ENCODE measurements at regions of chr20 and their contacts with region 1.

Region 1: DNA sequence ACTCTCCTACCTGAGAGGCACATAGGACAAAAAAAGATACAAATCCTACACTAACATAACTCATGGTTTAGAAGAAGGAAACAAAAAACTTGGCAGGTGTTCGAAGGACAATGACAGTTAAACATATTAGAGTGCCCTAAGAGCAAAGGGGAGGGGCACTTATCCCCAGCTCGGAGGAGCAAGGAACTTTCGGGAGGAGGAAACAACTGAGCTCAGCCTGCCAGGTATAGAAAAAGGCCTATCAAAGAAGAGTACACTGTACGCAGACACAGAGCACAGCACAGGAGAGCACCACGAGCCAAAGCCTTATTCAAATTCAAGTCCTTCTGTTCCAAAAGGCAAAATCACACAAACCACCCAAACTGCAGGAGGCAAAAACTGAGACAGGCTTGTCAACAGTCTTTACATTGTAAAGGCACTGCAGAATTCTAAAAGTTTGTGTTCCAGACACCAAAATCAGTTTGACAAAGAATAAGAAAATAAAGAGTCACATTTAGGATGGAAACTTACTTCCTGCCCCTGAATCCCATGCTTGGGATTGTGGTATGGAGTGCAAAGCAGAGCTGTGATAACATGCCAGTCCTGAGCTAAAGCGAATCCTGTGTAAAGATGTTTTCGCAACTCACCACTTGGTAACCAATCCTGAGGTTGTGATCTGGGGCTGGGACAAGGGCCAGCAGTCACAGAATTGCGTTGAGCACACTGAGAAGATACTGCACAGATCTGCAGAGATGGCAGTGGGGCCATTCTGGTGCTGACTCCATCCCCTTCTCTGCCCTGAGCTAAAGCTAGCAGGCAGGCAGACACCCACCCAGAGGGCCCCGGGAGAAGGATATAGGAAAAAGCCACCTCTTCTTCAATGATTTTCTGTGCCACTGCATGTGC is 108.6 kb downstream of the CHD6 start:
- DNase-seq: peak; percentile 49 to 68
- H3K4me3 ChIP-seq: no peak overlapping the region
- H3K27ac ChIP-seq: peak overlapping the region; percentile 39 to 54
- H3K4me1 ChIP-seq: peaks cover 0 to 36% (median 23%) of the 10 kb centered on the region in 4 donors
- H3K27me3 ChIP-seq: no peaks in the 10 kb centered on the region
- CTCF ChIP-seq: no peak

Region 2: GRCh38 chr20:41462372-41463161 is 47.0 kb before region 1 on chr20:
- intact Hi-C with region 1: no loop called
- DNase-seq: no peak
- H3K4me3 ChIP-seq: no peak overlapping the region
- H3K27ac ChIP-seq: no peak overlapping the region
- H3K4me1 ChIP-seq: no peaks in the 10 kb centered on the region
- H3K27me3 ChIP-seq: no peaks in the 10 kb centered on the region
- CTCF ChIP-seq: no peak

Region 3: DNA sequence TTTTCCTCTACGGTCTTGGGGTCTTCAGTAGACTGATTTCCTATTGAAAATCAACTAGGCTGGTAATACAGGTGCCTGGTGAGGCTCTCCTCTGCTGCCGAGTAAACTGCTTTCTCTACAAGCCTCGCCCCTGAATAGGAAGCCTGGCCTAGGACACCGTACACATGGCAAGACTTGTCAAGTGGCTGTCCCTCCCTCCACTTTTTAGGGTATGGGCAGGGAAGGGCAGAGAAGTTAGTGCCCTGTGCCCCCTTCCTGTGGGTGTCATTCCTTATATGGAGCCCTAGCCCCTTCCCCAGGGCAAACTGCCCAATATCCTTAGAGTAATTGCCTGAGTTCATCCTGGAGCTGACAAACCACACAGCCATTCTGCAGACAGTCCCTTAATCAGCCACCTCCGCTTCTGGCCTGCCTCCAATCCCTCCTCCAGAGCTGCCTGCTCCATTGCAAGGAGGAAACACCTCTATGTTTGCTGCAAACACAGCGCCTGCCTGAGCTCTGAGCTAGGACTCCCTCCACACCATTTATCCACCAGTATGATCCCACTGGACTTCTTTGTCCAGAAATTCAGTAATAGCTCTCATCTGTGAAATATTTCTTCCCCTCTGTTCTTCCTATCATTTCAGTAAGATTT is 15.5 kb after region 1 on chr20:
- intact Hi-C with region 1: no loop called
- DNase-seq: peak; percentile 31 to 70
- H3K4me3 ChIP-seq: no peak overlapping the region
- H3K27ac ChIP-seq: no peak overlapping the region
- H3K4me1 ChIP-seq: peaks cover 0 to 22% (median 11%) of the 10 kb centered on the region in 4 donors
- H3K27me3 ChIP-seq: no peaks in the 10 kb centered on the region
- CTCF ChIP-seq: no peak

Region 4: DNA sequence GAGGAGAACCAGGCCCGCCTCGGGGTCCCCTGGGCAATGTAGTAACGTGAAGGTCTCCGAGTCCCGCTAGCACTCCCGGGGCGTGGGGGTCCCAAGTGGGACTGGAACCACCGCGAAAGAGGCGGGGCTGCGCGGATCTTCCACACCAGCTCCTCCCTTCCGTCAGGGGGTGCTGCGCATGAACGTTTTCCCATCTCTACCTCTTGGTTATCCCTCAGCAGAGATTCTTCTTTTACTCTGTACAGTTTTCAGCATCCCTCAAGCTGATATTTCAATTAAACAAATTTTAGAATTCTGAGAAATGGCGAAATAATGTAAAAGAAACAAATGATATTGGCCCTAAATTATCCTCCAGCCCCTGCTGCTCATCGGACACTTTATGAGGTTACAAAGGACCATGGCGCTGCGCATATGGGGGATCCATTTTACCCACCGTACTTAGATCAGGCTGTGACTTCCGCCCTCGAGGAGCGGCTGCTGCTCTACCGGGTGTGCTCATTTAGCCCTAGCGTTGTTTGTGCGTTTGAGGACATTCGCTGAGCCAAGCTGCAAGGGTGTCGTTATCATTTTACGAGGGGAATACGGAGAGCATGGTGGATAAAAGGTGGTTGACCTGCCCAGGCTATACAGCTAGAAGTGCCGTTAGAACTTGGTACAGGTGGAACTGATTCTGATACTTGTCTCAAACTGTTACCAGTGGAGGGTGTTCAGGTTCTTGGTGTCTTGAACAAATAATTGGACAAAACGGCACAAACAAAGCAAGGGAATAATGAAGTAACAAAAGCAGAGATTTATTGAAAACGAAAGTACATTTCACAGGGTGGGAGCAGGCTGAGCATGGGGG is 183.8 kb after region 1 on chr20:
- intact Hi-C with region 1: loop called (anchors 10 kb)
- DNase-seq: peak; percentile 84 to 87
- H3K4me3 ChIP-seq: peak overlapping the region; percentile 74 to 79
- H3K27ac ChIP-seq: peak overlapping the region; percentile 90 to 94
- H3K4me1 ChIP-seq: peaks cover 0 to 11% (median 4%) of the 10 kb centered on the region in 4 donors
- H3K27me3 ChIP-seq: no peaks in the 10 kb centered on the region
- CTCF ChIP-seq: peak; percentile 27 to 46

Measured in tibial artery (tissue), 4 donors.